ENCODE measurements at regions of chr5 and their contacts with region 1.

Region 1: DNA sequence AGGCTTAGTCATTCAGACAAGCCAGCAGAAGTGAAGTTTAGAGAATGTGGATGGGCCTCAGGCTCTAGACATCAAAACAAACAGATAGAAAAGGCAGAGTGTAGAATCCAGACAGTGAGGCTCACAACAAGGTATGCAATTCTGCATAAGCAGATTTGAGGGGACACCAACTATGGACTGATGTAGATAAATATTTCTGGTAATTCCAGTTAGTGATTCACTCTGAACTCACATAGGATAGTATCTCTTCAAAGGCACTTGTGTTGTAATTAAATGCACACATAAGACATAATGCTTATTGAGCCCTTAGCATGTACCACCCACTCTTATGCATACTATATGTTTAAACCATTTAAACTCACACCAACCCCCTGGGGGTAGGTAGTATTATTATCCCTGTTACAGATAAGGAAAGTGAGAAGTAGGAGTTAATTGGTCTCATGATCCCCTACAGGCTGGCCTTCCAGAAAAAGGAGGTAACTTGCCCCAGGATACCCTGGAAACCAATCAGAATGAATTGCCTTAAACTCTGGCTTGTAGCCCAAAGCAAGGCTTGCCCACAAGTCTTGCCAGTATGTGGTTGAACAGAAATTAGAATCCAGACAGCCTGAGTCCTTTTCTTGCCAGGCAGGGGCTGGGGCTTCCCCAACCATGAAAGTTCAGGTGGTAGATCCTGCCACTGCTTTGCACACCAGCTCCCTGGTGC is 39.5 kb upstream of the HSPB3 start:
- DNase-seq: no peak
- H3K4me3 ChIP-seq: no peak overlapping the region
- H3K27ac ChIP-seq: no peak overlapping the region
- H3K4me1 ChIP-seq: no peaks in the 10 kb centered on the region
- H3K27me3 ChIP-seq: no peaks in the 10 kb centered on the region
- CTCF ChIP-seq: no peak

Region 2: GRCh38 chr5:54243473-54244080 is 172.5 kb before region 1 on chr5:
- intact Hi-C with region 1: loop called (anchors 10 kb)
- DNase-seq: no peak
- H3K4me3 ChIP-seq: no peak overlapping the region
- H3K27ac ChIP-seq: no peak overlapping the region
- H3K4me1 ChIP-seq: no peaks in the 10 kb centered on the region
- H3K27me3 ChIP-seq: no peaks in the 10 kb centered on the region
- CTCF ChIP-seq: peak; percentile 57 to 69

Region 3: DNA sequence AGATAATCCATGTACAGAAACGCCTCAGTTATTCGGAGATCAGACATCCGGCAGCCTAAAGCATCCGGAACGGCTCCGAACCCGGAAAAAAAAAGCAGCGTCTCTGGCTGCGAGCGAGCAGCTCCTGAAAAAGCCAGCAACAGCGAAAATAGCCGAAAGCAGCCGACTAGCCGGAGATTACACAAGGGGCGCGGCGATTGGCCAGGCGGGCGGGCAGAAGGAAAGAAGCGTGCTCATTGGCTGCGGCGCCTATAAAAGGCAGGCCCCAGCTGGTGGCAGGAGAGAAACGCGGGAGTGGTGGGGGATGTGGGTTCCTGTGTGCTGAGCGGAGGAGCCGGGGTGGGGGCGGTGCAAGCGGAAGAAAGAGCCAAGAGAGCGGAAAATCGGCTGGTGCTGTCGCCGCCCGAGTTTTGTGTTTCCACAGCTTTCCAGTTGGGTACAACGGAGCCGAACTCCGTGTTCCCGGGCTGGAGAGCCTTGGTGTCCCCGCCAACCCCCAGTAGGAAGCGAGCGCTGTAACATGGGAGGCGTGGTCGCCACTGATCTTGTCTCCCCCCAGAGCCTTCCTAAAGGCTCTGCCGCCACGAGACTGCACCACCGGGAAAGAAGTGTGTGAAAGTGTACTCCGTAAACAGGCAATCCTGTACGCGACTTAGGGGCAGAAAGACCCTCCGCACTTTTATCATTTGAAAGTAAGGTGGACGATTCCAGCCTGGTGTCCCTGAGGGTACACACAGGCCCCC is 105.4 kb before region 1 on chr5 and contains the start of gene ARL15:
- intact Hi-C with region 1: loop called (anchors 10 kb)
- DNase-seq: peak; percentile 98 to 99
- H3K4me3 ChIP-seq: peak within 1 kb of the TSS; percentile 86 to 97
- H3K27ac ChIP-seq: peak within 1 kb of the TSS; percentile 81 to 85
- H3K4me1 ChIP-seq: peaks cover 0 to 18% (median 11%) of the 10 kb centered on the region in 4 donors
- H3K27me3 ChIP-seq: no peaks in the 10 kb centered on the region
- CTCF ChIP-seq: peak in 1 of 2 experiments; percentile 21

Measured in tibial artery (tissue), 4 donors.